Activated B cell treated with CpG ODN at 0.5 μM for 24 hours (primary cell): ENCODE measurements at regions of chr18 and their contacts with region 1.

Region 1: GRCh38 chr18:45106331-45106774 is 425.7 kb downstream of the SETBP1 start:
- DNase-seq: peak; percentile 17
- ATAC-seq: peak; percentile 56
- H3K4me3 Mint-ChIP-seq: peak overlapping the region; percentile 21
- H3K27ac Mint-ChIP-seq: no peak overlapping the region
- H3K4me1 Mint-ChIP-seq: peaks cover 2% of the 10 kb centered on the region
- H3K27me3 Mint-ChIP-seq: no peaks in the 10 kb centered on the region
- CTCF ChIP-seq: no peak

Region 2: DNA sequence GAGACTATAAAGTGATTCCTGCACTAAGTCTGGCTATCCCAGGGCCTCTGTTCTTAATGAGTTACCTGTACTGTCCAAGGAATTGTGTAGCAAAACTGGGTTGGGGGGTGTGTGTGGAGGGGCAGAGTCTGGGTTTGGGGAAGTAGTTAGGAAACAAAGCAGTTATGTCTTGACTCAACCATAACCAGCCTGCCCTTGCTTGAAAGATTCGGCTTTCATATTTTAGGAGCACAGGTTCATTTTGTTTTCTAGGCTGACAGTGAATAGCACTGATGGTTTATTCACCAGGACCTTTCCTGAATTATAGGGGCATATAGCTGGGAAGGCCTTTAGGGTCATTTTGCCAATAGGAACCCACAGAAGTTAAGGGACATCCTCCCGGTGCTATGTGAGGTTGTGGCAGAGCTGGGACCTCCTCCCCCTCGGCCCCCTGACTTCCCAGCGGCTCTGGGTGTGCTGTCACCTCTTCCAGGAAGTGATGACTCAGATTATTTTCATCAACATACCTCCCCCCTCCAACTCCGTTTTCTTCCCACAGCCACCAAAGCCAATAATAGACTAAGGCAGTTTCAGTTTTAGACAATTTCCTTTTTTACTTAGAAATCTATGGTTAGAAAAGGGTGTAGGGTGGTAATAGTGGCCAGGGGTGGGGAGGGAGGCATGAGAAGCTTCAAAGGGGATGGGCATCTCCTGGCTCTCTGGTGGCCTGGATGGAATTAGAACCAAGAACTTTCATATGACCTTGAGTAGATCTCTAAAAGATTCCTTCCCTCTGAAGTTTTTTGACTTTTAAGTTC is 380.9 kb before region 1 on chr18:
- CTCF ChIA-PET with region 1: no interaction called
- POLR2A ChIA-PET with region 1: interaction called, 3 read pairs
- intact Hi-C with region 1: loop called (anchors 1 kb)
- DNase-seq: peak; percentile 41
- ATAC-seq: peak; percentile 59
- H3K4me3 Mint-ChIP-seq: peak overlapping the region; percentile 70
- H3K27ac Mint-ChIP-seq: peak overlapping the region; percentile 88
- H3K4me1 Mint-ChIP-seq: peaks cover 99% of the 10 kb centered on the region
- H3K27me3 Mint-ChIP-seq: no peaks in the 10 kb centered on the region
- CTCF ChIP-seq: no peak

Region 3: DNA sequence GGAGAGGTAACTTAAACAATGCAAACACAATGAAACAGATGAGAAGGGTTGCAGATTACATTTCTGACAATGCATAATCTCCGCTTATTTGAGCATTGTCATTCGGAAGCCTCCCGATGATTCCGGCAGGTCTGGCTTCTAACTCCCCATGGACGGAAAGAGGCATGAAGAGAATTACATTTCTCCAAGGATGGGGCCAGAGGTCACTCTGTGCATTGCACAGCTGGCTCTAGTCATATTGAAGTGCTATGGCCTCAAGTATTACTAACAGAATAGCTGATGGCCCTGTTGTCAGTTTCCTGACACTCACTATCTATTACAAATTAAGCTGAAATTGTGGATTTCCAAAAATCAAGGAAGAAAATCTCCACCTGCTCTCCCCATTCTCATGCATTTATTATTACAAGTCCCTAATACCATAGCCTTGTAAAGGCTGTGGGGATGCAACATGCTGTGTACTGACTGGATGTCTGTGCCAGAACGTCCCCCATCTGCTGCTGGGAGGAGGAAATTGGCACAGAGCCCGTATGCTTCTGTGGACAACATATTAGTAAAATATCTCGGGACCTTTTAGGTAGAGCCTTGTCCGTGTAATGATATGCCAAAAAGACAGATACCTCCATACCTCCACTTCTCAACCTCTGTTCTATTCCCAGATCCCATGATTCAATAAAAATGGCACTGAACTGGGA is 257.6 kb before region 1 on chr18:
- CTCF ChIA-PET with region 1: no interaction called
- POLR2A ChIA-PET with region 1: no interaction called
- intact Hi-C with region 1: no loop called
- DNase-seq: no peak
- ATAC-seq: no peak
- H3K4me3 Mint-ChIP-seq: no peak overlapping the region
- H3K27ac Mint-ChIP-seq: no peak overlapping the region
- H3K4me1 Mint-ChIP-seq: peaks cover 81% of the 10 kb centered on the region
- H3K27me3 Mint-ChIP-seq: no peaks in the 10 kb centered on the region
- CTCF ChIP-seq: no peak

Region 4: GRCh38 chr18:44887227-44887631 is 219.1 kb before region 1 on chr18:
- CTCF ChIA-PET with region 1: no interaction called
- POLR2A ChIA-PET with region 1: interaction called, 5 read pairs
- intact Hi-C with region 1: loop called (anchors 1 kb)
- DNase-seq: peak; percentile 23
- ATAC-seq: peak; percentile 95
- H3K4me3 Mint-ChIP-seq: peak overlapping the region; percentile 59
- H3K27ac Mint-ChIP-seq: peak overlapping the region; percentile 94
- H3K4me1 Mint-ChIP-seq: peaks cover 58% of the 10 kb centered on the region
- H3K27me3 Mint-ChIP-seq: no peaks in the 10 kb centered on the region
- CTCF ChIP-seq: no peak

Region 5: DNA sequence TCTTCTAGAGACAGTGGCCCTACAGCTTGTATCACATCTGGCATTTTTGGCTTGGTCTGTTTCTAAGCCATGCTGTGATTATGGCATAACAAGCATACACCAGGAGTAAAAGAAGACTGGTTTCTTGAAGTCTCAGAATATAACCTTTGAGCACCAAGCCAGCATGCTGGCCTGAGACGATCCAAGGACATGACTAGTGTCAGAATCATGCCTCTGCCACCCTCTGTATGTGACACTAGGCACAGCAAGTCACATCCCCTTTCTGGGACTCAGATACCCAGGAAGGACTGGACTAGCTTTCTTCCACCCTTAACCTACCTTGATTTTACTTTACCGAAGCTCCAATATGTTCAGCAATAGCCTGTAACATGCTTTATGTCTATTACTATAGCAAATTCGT is 80.2 kb before region 1 on chr18:
- CTCF ChIA-PET with region 1: no interaction called
- POLR2A ChIA-PET with region 1: no interaction called
- intact Hi-C with region 1: loop called (anchors 5 kb)
- DNase-seq: no peak
- ATAC-seq: no peak
- H3K4me3 Mint-ChIP-seq: no peak overlapping the region
- H3K27ac Mint-ChIP-seq: no peak overlapping the region
- H3K4me1 Mint-ChIP-seq: peaks cover 39% of the 10 kb centered on the region
- H3K27me3 Mint-ChIP-seq: no peaks in the 10 kb centered on the region
- CTCF ChIP-seq: no peak

Region 6: DNA sequence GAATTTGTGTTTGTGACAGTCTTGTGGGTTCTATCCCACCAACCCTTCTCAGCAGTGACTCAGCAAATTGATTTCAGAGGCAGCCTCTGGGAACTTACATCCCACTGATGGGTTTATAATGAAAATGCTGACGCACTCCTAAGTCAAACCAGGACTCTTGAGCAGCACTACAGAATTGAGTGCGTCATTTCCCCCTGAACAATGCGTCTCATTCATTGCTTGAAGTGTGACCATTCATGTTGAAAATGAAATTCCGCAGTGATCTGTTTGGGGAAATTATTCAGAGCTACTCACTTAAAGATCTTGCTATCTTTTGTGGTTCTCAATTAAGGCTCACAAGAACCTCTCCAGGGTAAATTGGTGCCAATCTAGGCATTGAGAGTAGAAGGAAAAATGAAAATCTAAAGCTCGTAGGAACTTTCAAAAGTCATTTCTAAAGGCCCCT is 91.2 kb after region 1 on chr18:
- CTCF ChIA-PET with region 1: no interaction called
- POLR2A ChIA-PET with region 1: no interaction called
- intact Hi-C with region 1: loop called (anchors 1 kb)
- DNase-seq: no peak
- ATAC-seq: peak; percentile 89
- H3K4me3 Mint-ChIP-seq: no peak overlapping the region
- H3K27ac Mint-ChIP-seq: peak overlapping the region; percentile 41
- H3K4me1 Mint-ChIP-seq: peaks cover 7% of the 10 kb centered on the region
- H3K27me3 Mint-ChIP-seq: no peaks in the 10 kb centered on the region
- CTCF ChIP-seq: no peak